Activated B cell treated with CpG ODN at 0.5 μM for 24 hours (primary cell): ENCODE measurements at regions of chr18 and their contacts with region 1.

Region 1: DNA sequence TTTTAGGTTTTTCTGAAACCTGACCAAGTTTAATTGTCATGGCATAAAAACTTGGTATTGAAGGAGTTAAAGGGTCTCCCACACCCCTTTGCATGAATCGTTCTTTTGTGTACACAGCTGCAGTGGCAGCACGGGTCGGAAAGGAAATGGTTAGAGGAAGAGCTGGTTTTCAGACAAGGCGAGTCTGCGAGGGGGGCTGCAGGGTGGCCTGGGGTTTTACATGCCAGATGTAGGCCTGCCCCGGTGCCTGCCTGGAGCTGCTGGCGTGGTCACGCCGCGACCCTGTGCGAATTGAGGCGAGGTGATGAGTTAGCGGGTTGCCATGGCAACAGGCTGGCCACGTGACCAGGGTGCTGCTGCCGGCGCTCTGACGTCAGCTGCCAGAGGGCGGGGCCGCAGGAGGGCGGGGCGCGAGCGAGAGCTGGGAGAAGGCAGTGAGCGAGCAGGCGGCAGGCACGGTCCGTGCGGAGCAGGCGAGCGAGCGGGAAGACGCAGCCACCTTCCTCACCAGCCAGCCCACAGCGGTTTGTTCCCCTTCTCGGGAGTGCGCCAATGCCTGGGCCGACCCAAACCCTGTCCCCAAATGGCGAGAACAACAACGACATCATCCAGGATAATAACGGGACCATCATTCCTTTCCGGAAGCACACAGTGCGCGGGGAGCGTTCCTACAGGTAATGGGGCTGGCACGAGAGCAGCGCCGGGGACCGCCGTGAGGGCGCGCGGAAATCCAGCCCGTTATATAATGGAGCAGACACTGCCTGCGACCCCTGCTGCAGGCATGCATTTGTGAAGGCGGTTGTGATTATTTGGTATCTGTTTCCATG is at the start of gene MAPRE2:
- DNase-seq: peak; percentile 100
- ATAC-seq: peak; percentile 84
- H3K4me3 Mint-ChIP-seq: peak within 1 kb of the TSS; percentile 98
- H3K27ac Mint-ChIP-seq: peak within 1 kb of the TSS; percentile 98
- H3K4me1 Mint-ChIP-seq: peaks cover 85% of the 10 kb centered on the region
- H3K27me3 Mint-ChIP-seq: no peaks in the 10 kb centered on the region
- CTCF ChIP-seq: no peak
- total RNA-seq, gene MAPRE2: 47.9 and 53.8 TPM in 2 replicates

Region 2: DNA sequence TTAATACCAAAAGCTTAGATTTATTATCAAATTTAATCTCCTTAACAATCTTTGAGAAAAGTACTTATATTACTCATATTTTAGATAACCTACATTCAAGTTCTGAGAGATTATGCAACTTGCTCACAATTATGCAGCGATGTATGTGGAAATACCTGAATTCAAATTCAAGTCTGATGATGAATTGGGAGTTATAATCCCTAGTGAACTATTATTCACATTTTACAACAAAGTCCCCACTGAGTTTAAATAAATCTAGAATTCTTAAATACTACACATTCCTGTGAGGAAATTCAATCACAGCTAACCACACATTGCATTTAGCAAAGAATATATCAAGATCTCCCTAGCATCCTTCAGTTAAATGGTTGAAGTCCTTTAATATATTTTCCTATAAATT is 1094.9 kb before region 1 on chr18:
- CTCF ChIA-PET with region 1: no interaction called
- POLR2A ChIA-PET with region 1: no interaction called
- intact Hi-C with region 1: no loop called
- DNase-seq: no peak
- ATAC-seq: no peak
- H3K4me3 Mint-ChIP-seq: no peak overlapping the region
- H3K27ac Mint-ChIP-seq: no peak overlapping the region
- H3K4me1 Mint-ChIP-seq: no peaks in the 10 kb centered on the region
- H3K27me3 Mint-ChIP-seq: no peaks in the 10 kb centered on the region
- CTCF ChIP-seq: no peak

Region 3: GRCh38 chr18:35005963-35006577 is 35.1 kb before region 1 on chr18:
- CTCF ChIA-PET with region 1: interaction called, 8 read pairs
- POLR2A ChIA-PET with region 1: interaction called, 5 read pairs
- intact Hi-C with region 1: loop called (anchors 1 kb)
- DNase-seq: no peak
- ATAC-seq: peak; percentile 83
- H3K4me3 Mint-ChIP-seq: no peak overlapping the region
- H3K27ac Mint-ChIP-seq: no peak overlapping the region
- H3K4me1 Mint-ChIP-seq: no peaks in the 10 kb centered on the region
- H3K27me3 Mint-ChIP-seq: no peaks in the 10 kb centered on the region
- CTCF ChIP-seq: peak; percentile 39

Region 4: GRCh38 chr18:35122586-35123224 is 81.5 kb after region 1 on chr18:
- CTCF ChIA-PET with region 1: interaction called, 5 read pairs
- POLR2A ChIA-PET with region 1: interaction called, 10 read pairs
- intact Hi-C with region 1: no loop called
- DNase-seq: no peak
- ATAC-seq: peak; percentile 91
- H3K4me3 Mint-ChIP-seq: peak overlapping the region; percentile 4
- H3K27ac Mint-ChIP-seq: peak overlapping the region; percentile 46
- H3K4me1 Mint-ChIP-seq: peaks cover 45% of the 10 kb centered on the region
- H3K27me3 Mint-ChIP-seq: no peaks in the 10 kb centered on the region
- CTCF ChIP-seq: no peak

Region 5: GRCh38 chr18:35240664-35241447 is 199.7 kb after region 1 on chr18 and contains the start of gene ZNF397:
- CTCF ChIA-PET with region 1: no interaction called
- POLR2A ChIA-PET with region 1: interaction called, 16 read pairs
- intact Hi-C with region 1: loop called (anchors 1 kb)
- DNase-seq: peak; percentile 93
- ATAC-seq: peak; percentile 97
- H3K4me3 Mint-ChIP-seq: peak within 1 kb of the TSS; percentile 97
- H3K27ac Mint-ChIP-seq: peak within 1 kb of the TSS; percentile 98
- H3K4me1 Mint-ChIP-seq: peaks cover 22% of the 10 kb centered on the region
- H3K27me3 Mint-ChIP-seq: no peaks in the 10 kb centered on the region
- CTCF ChIP-seq: no peak
- total RNA-seq, gene ZNF397: 35.2 and 48.7 TPM in 2 replicates

Region 6: DNA sequence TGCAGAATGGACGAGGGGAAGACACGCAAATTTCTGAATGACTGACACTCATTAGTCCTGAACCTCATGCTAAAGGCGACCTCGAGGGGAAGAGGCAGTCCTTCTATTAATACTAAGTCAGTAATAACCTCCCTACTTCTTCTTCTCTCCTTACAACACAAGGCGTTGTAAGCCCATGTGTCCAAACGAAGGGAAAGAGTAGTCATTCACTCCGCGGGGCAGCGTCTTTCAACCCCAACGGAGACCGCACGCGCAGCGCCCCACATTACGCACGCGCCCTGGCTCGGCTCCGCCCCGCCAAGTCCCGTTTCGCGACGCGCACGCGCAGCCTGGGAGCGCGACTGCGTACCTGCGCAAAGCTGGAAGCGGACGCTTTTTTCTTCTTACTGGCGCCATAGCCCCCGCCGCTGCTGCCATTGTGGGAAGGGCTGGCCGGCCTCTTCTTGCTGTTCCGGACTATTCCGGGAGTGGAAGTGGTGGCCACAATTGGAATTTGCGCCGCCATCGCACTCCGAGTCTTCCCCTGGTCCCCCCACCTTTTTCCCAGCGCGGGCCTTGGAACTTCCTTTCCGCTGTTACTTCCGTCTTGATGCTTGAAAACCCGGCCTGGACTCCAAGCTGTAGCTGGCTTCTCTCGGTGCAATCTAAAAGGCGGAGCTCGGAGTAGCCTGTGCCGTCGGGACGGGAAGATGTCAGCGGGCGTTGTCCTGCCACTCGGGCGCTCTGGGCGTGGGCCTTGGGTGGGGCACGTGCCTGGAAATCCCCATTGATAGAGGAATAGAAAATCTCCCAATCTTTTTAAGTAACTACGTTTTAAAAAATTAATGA is 456.4 kb after region 1 on chr18 and contains the start of gene INO80C:
- CTCF ChIA-PET with region 1: no interaction called
- POLR2A ChIA-PET with region 1: interaction called, 4 read pairs
- intact Hi-C with region 1: loop called (anchors 1 kb)
- DNase-seq: peak; percentile 95
- ATAC-seq: peak; percentile 88
- H3K4me3 Mint-ChIP-seq: peak within 1 kb of the TSS; percentile 100
- H3K27ac Mint-ChIP-seq: peak within 1 kb of the TSS; percentile 100
- H3K4me1 Mint-ChIP-seq: peaks cover 51% of the 10 kb centered on the region
- H3K27me3 Mint-ChIP-seq: no peaks in the 10 kb centered on the region
- CTCF ChIP-seq: no peak
- total RNA-seq, gene INO80C: 31.6 and 35.9 TPM in 2 replicates

Region 7: DNA sequence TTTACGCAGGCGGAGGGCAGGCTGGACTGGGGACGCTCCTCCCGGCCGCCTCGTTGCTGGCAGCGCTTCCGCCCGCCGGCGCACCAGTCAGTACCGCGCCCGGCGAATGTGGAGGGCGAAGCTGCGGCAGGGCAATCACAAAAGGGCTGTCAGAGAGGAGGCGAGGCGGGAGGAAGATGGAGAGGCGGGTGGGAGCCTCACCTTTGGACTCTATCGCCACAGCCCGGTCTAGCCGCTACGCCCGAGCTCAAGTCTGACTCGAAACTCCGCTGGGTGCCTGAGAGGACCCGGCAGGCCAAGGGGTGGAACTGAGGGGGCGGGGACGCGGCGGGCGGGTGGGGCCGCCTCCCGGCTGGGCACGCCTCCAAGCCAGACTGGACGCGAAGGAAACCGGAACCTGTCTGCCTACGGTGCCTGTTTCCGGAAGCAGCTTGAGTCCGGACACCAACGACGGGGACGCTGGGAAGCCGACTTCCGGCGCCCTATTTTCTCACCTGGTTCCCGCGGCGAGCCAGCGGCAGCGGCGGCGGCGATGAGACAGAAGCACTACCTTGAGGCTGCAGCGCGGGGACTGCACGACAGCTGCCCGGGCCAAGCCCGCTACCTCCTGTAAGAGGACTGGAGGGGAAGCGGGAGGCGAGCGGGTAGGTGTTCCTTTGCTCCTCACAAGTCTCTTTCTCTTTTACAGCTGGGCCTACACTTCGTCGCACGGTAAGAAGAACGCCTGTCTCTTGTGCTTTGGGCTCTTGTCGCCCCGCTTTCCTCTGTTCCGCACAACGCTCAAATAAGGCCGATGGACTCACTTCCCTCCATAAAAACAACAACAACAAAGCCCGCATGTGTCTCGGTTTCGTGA is 931.2 kb after region 1 on chr18 and contains the start of gene RMP24:
- CTCF ChIA-PET with region 1: no interaction called
- POLR2A ChIA-PET with region 1: interaction called, 4 read pairs
- intact Hi-C with region 1: loop called (anchors 2 kb)
- DNase-seq: peak; percentile 85
- ATAC-seq: peak; percentile 94
- H3K4me3 Mint-ChIP-seq: peak within 1 kb of the TSS; percentile 98
- H3K27ac Mint-ChIP-seq: peak within 1 kb of the TSS; percentile 97
- H3K4me1 Mint-ChIP-seq: peaks cover 50% of the 10 kb centered on the region
- H3K27me3 Mint-ChIP-seq: no peaks in the 10 kb centered on the region
- CTCF ChIP-seq: no peak